H1 (cell line): ENCODE measurements at regions of chr9 and their contacts with region 1.

Region 1: GRCh38 chr9:92140074-92140753 is 25.0 kb upstream of the SPTLC1 start:
- DNase-seq: peak; percentile 82 to 97
- H3K4me3 ChIP-seq: peak overlapping the region in 1 of 4 experiments; percentile 62; a peak in 2 of 8 replicates
- H3K27ac ChIP-seq: no peak overlapping the region
- H3K4me1 ChIP-seq: peaks cover 0 to 5% (median 4%) of the 10 kb centered on the region in 4 experiments; a peak in 4 of 7 replicates
- H3K27me3 ChIP-seq: peaks cover 3 to 26% (median 16%) of the 10 kb centered on the region in 4 experiments; a peak in 6 of 7 replicates
- CTCF ChIP-seq: peak; percentile 96 to 98 (median 98)
- EP300 ChIP-seq: no peak; a peak in 1 of 3 replicates
- POLR2A ChIP-seq: no peak
- RAD21 ChIP-seq: peak; percentile 83 to 92

Region 2: GRCh38 chr9:91530829-91531228 is 609.4 kb before region 1 on chr9:
- CTCF ChIA-PET with region 1: no interaction called
- POLR2A ChIA-PET with region 1: no interaction called
- DNase-seq: no peak
- H3K4me3 ChIP-seq: no peak overlapping the region
- H3K27ac ChIP-seq: no peak overlapping the region
- H3K4me1 ChIP-seq: peaks cover 0 to 4% (median 0%) of the 10 kb centered on the region in 4 experiments; a peak in 1 of 7 replicates
- H3K27me3 ChIP-seq: no peaks in the 10 kb centered on the region
- CTCF ChIP-seq: no peak
- EP300 ChIP-seq: no peak
- POLR2A ChIP-seq: no peak
- RAD21 ChIP-seq: no peak

Region 3: DNA sequence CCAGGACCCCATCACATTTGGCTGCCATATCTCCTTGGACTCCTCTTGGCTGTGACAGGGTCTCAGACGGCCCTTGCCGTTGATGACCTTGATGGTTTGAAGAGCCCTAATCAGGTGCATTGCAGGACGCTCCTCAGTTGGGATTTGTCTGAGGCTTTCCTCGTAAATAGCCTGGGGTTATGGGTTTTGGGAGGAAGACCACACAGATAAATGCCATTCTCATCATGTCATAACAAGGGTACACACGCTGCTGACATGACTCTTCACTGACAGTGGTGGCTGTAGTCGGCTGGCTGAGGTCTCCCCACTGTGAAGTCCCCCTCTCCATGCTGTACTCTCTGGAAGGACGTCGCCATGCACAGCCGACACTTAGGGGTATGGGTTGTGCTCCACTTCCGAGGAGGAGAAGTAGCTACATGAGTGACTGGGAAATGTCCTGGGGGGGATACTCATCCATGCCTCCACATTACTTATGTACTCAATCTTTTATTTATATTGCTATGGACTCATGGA is 17.9 kb after region 1 on chr9:
- CTCF ChIA-PET with region 1: interaction called, 11 read pairs
- POLR2A ChIA-PET with region 1: interaction called, 3 read pairs
- DNase-seq: no peak
- H3K4me3 ChIP-seq: no peak overlapping the region
- H3K27ac ChIP-seq: no peak overlapping the region
- H3K4me1 ChIP-seq: no peaks in the 10 kb centered on the region
- H3K27me3 ChIP-seq: no peaks in the 10 kb centered on the region
- CTCF ChIP-seq: no peak
- EP300 ChIP-seq: no peak
- POLR2A ChIP-seq: no peak
- RAD21 ChIP-seq: no peak

Region 4: GRCh38 chr9:92191801-92192200 is 51.6 kb after region 1 on chr9:
- CTCF ChIA-PET with region 1: interaction called, 56 read pairs
- POLR2A ChIA-PET with region 1: interaction called, 4 read pairs
- DNase-seq: no peak
- H3K4me3 ChIP-seq: no peak overlapping the region
- H3K27ac ChIP-seq: no peak overlapping the region
- H3K4me1 ChIP-seq: peaks cover 0 to 4% (median 0%) of the 10 kb centered on the region in 4 experiments; a peak in 1 of 7 replicates
- H3K27me3 ChIP-seq: no peaks in the 10 kb centered on the region
- CTCF ChIP-seq: no peak
- EP300 ChIP-seq: no peak
- POLR2A ChIP-seq: no peak
- RAD21 ChIP-seq: no peak

Region 5: DNA sequence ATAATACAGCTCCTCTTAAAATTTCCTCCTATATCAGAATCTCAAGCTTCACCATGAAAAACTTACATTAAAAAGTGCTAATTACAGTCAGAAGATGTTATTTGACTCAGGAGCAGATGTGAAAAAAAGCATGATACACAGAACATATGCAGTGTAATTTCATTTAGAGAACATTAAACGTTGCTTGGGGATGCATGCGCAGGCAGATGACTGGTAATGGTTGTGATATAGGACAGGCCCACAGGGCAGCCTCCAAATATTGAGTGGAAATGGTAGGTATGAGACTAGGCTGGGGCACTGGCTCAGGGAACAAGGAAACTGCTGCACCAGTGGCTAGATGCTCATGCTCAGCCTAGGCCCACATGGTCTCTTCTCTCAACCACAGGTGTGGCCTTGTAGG is 83.5 kb after region 1 on chr9:
- CTCF ChIA-PET with region 1: interaction called, 18 read pairs
- POLR2A ChIA-PET with region 1: interaction called, 3 read pairs
- DNase-seq: no peak
- H3K4me3 ChIP-seq: no peak overlapping the region
- H3K27ac ChIP-seq: no peak overlapping the region
- H3K4me1 ChIP-seq: no peaks in the 10 kb centered on the region
- H3K27me3 ChIP-seq: no peaks in the 10 kb centered on the region
- CTCF ChIP-seq: no peak
- EP300 ChIP-seq: no peak
- POLR2A ChIP-seq: no peak
- RAD21 ChIP-seq: no peak

Region 6: DNA sequence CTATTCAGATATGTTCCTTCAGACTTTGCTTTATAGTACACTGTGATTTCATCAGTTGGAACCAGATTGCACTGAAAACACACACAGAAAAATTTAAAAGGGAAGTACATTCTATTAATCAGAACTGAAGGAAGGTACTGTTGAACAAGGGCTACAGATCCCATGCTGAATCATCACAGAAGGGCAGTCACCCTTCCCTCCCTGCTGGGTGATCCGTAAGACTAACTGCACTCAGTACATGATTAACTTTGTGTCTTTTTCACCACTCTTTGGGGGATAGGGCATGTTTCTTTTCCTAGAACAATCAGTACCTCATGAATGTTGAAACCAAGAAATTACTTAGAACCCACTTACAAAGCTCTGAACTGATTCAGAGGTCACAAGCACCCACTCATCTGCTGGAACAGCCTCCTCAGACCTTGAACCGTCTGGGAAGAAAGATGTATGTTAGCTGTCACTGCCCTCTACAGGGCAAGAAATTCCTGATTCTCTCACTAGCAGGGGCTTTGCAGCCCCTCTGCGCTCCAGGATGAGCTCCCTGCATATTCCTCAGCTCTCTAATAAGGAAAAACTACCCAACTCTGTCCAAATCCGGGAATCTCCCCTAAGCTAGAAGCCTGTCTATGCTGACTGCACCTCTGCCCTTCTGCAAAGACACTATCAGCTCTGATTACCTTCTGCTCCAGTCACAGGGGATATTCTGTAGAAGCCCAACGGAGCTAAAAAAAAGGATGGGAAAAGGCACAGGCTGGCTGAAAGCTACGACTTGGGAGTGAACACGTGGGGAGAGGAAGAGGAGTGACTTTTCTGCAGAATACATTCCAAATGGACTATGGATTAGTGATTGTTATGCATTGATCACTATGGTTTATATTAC is 102.3 kb after region 1 on chr9:
- CTCF ChIA-PET with region 1: interaction called, 116 read pairs
- POLR2A ChIA-PET with region 1: interaction called, 7 read pairs
- DNase-seq: no peak
- H3K4me3 ChIP-seq: no peak overlapping the region
- H3K27ac ChIP-seq: no peak overlapping the region
- H3K4me1 ChIP-seq: no peaks in the 10 kb centered on the region
- H3K27me3 ChIP-seq: no peaks in the 10 kb centered on the region
- CTCF ChIP-seq: peak in 2 of 3 experiments; percentile 34 to 39; a peak in 3 of 4 replicates
- EP300 ChIP-seq: no peak
- POLR2A ChIP-seq: no peak
- RAD21 ChIP-seq: peak; percentile 29 to 57